Sigmoid colon (tissue), 7 donors: ENCODE measurements at regions of chr3 and their contacts with region 1.

Region 1: DNA sequence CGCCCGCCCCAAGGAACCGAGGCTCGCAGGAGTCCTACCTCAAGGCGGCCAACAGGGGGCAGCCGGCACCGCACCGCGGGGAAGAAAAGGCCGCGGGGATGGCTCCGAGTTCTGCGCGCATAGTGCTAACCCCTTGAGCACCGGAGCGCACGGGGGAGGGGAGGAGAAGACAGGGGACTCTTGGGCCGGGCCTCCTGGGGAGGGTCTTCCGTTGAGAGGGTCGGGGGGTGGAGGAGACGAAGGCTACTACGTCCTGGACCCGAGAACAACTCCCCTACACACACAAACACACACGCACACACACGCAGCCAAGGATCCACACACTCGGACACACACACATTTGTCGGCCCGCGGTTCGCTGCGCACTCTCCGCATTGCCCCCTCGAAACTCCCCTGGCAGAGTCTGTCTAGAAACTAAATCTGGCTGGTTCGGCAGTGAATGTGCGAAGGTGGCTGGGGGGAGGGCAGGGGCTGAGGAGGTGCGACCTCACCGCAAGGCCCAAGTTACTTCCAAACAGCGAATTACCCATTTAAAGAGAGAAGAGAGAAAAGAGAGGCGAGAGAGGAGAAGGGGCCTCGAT is 1.8 kb downstream of the WNT5A start:
- DNase-seq: peak; percentile 91
- H3K4me3 ChIP-seq: peak overlapping the region; percentile 50 to 86 (median 75)
- H3K27ac ChIP-seq: peak overlapping the region; percentile 79 to 83 (median 82)
- H3K4me1 ChIP-seq: peaks cover 0 to 45% (median 37%) of the 10 kb centered on the region in 4 donors
- H3K27me3 ChIP-seq: peaks cover 0 to 5% (median 0%) of the 10 kb centered on the region in 3 donors
- CTCF ChIP-seq: peak in 3 of 4 experiments; percentile 3 to 95 (median 45)
- EP300 ChIP-seq: no peak
- POLR2A ChIP-seq: no peak

Region 2: GRCh38 chr3:54891548-54892120 is 593.7 kb before region 1 on chr3:
- intact Hi-C with region 1: loop called (anchors 5 kb)
- DNase-seq: peak; percentile 94
- H3K4me3 ChIP-seq: no peak overlapping the region
- H3K27ac ChIP-seq: peak overlapping the region; percentile 82 to 88 (median 87)
- H3K4me1 ChIP-seq: peaks cover 0 to 55% (median 48%) of the 10 kb centered on the region in 4 donors
- H3K27me3 ChIP-seq: no peaks in the 10 kb centered on the region
- CTCF ChIP-seq: peak; percentile 35 to 58 (median 52)
- EP300 ChIP-seq: peak in 2 of 4 donors; percentile 29 to 75
- POLR2A ChIP-seq: no peak

Region 3: DNA sequence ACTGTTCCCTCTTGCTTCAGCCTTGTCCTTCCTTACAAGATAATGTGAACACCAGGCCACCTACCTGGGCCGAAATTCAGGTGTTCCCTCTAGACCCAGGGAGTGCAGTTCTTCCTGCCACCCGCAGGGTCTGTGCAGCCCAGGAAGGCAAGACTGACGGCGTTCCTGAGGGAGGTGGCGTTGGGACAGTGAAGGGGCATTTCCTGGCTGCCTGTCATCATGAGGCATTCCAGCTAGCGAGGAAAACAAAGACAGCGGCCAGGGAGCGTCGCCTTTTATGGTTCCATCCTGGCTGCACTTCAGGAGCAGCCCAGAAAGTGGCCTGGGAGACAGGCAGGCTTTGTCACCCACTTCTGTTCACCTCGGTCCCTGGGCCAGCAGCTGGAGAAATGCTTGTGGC is 86.6 kb after region 1 on chr3:
- intact Hi-C with region 1: loop called (anchors 5 kb)
- DNase-seq: peak; percentile 75
- H3K4me3 ChIP-seq: peak overlapping the region in 1 of 4 donors; percentile 2
- H3K27ac ChIP-seq: peak overlapping the region; percentile 4 to 63 (median 38)
- H3K4me1 ChIP-seq: peaks cover 0 to 64% (median 44%) of the 10 kb centered on the region in 4 donors
- H3K27me3 ChIP-seq: no peaks in the 10 kb centered on the region
- CTCF ChIP-seq: peak; percentile 12 to 39 (median 27)
- EP300 ChIP-seq: no peak
- POLR2A ChIP-seq: no peak

Region 4: DNA sequence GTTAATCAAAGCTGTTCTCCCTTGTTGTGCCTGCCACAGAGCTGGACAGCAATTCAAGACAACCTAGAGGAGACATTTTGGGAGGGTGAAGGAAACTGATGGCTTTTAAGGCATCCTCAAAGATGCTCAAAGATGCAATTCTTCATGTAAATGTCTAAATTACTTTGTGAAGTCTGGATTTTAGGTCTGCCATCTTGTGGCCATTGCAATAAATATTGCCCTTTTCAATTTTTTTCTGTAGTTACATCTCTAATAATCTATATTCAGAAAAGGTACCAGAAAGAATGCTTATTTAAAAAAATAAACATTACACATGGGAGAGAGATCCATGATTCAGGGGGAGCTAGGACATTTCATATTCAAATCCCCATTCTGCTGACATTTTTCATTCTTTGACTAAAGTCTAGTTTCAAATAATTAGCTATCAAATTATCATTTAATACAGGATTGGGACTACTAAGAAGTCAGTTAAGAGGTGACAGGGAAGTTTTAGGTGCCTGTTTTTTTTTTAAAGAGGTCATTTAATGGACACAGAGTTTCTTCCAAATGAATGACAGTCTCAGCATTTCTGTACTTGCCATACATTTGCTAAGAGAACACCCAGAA is 261.6 kb after region 1 on chr3:
- intact Hi-C with region 1: loop called (anchors 5 kb)
- DNase-seq: no peak
- H3K4me3 ChIP-seq: no peak overlapping the region
- H3K27ac ChIP-seq: no peak overlapping the region
- H3K4me1 ChIP-seq: peaks cover 0 to 5% (median 0%) of the 10 kb centered on the region in 4 donors
- H3K27me3 ChIP-seq: no peaks in the 10 kb centered on the region
- CTCF ChIP-seq: peak in 2 of 4 experiments; percentile 17 to 29
- EP300 ChIP-seq: no peak
- POLR2A ChIP-seq: no peak

Region 5: DNA sequence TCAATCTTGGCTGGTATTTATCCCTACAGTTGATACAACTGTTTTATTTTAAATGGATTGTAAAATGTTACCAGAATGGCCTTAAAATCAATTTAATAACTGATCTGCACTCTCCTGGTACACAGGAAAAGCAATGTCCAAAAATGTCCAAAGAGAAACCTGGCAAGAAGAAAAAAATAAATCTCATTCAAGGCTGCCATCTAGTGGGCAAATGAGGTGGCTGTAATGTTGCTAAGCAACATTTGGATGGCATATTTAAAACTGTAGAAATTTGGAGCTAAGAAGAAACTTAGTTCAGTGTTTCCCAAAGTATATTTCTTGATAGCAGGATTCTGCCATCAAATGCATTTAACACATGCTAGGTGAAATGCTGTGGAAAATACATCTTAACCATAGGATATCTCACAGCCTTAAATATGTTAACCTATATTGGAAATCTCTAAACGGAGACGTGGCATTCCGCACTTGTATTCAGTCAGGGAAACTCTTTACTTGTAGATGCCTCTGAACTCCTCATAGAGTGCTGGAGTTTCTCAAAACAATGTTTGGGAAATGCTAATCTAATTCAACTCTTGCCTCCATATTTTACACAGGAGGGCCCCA is 766.1 kb after region 1 on chr3:
- intact Hi-C with region 1: loop called (anchors 2 kb)
- DNase-seq: no peak
- H3K4me3 ChIP-seq: no peak overlapping the region
- H3K27ac ChIP-seq: no peak overlapping the region
- H3K4me1 ChIP-seq: no peaks in the 10 kb centered on the region
- H3K27me3 ChIP-seq: no peaks in the 10 kb centered on the region
- CTCF ChIP-seq: peak; percentile 38 to 78 (median 62)
- EP300 ChIP-seq: no peak
- POLR2A ChIP-seq: no peak